BJ (cell line): ENCODE measurements at regions of chr17 and their contacts with region 1.

Region 1: DNA sequence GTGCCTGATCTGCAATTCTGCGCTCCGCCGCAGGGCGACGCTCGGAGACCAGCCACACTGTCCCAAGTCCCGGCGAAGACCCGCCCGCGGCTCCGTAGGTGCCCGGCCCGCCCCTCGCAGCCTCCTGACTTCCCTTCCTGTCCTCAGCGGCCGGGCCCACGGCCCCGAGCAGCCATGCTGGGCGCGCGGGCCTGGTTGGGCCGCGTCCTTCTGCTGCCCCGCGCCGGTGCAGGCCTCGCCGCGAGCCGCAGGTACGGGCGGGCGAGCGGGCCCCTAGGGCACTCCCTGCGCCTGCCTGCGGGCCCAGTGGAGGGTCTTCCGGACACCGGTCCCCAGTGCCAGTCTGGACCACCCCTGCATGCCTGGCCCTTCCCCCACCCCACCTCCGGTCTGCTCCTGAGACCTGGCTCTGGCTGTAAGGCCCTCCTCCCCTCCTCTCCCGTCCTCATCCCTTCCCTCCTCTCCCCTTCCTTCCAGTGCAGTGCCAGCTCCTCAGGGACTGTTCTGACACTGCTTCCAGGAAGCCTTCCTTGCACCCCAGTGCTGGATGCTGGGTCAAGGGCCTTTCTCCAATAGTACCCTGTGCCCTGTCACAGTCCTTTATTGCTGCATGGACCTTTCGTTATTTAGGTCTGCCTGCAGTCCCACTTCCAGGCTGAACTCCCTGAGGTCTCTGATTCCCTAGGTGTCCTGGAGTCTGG is at the start of gene SPATA20:
- DNase-seq: peak; percentile 29
- H3K4me3 ChIP-seq: peak within 1 kb of the TSS; percentile 52
- H3K27me3 ChIP-seq: no peaks in the 10 kb centered on the region
- CTCF ChIP-seq: peak; percentile 96
- polyA plus RNA-seq, gene SPATA20: 27.7 and 46.4 TPM in 2 replicates

Region 2: GRCh38 chr17:50421308-50422051 is 125.7 kb before region 1 on chr17:
- CTCF ChIA-PET with region 1: no interaction called
- POLR2A ChIA-PET with region 1: no interaction called
- DNase-seq: no peak
- H3K4me3 ChIP-seq: no peak overlapping the region
- H3K27me3 ChIP-seq: no peaks in the 10 kb centered on the region
- CTCF ChIP-seq: no peak

Region 3: DNA sequence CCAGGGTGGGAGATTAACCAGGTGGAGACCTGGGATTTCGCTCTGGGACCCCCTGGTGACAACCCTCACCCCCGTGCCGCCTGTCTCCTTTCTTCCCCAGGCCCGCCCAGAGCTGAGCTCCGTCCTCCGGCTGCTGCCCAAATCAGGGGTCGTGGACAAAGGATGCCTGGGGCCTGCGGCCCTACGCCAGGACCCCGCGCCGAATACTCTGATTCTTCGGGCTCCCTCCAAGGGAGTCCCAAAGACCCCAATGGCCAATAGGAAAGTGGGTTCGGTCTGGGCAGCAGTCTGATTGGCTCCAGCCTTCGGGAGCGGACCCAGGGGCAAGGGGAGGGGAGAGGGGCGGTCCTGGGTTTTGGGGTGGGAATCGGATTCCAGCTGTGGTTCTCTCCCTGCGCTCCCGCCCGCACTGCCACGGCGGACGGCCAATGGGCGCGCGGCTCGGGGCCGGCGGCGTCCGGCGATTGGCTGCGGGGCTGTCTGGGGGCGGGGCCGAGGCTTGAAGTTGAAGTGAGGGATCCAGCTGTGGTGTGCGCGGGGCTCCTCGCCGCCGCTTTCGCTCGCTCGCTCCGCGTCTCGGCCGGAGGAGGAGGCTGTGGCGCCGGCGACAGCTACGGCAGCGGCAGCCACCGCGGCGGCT is 13.1 kb after region 1 on chr17 and contains the start of gene CACNA1G:
- CTCF ChIA-PET with region 1: interaction called, 41 read pairs
- POLR2A ChIA-PET with region 1: no interaction called
- DNase-seq: peak; percentile 25
- H3K4me3 ChIP-seq: peak within 1 kb of the TSS; percentile 37
- H3K27me3 ChIP-seq: peaks cover 40% of the 10 kb centered on the region
- CTCF ChIP-seq: no peak
- polyA plus RNA-seq, gene CACNA1G: 0.01 and 0.02 TPM in 2 replicates

Region 4: DNA sequence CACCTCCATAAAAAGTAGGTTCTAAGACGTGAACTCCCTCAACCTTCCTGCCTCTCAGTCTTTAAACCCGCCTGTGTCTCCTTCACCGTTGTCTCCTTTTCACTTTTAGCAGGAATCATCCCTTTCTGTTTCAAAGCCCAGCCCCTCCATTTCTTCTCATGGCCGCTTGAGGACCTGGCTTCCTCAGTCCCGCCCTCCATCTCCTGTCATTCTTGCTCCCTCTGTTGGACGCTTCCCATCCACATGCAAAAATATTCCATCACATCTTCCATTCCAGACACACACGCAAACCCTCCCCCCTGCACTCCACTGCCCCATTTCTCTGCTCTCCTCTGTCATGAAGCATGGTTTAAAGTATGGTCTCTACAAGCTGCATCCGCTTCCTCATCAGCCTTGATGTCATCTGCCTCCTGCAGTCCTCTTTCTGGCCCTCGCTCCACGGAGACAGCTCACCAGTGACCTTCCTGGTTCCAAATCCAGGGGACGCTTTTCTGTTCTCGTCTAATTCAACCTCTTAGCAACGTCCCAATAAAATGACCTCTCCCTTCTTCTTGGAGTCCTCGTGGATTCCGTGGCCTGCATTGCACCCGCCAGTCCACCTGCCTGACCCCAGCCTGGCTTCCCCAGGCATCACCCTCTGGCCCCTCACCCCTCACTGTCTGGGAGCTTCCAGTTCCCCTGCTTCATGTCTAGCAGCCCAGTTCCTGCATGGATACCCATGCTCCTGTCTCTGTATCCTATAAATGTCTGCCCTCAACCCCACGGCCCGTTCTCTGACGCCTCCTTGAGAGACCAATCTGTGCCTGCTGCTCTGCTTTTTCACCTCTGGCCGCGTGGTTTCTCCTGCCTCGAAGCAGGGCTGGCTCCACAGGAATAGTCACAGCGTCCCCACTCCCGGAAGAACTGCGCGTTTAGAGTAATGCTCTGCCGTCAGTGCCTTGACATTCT is 134.4 kb after region 1 on chr17:
- CTCF ChIA-PET with region 1: interaction called, 11 read pairs
- POLR2A ChIA-PET with region 1: no interaction called
- DNase-seq: no peak
- H3K4me3 ChIP-seq: no peak overlapping the region
- H3K27me3 ChIP-seq: no peaks in the 10 kb centered on the region
- CTCF ChIP-seq: peak; percentile 74

Region 5: DNA sequence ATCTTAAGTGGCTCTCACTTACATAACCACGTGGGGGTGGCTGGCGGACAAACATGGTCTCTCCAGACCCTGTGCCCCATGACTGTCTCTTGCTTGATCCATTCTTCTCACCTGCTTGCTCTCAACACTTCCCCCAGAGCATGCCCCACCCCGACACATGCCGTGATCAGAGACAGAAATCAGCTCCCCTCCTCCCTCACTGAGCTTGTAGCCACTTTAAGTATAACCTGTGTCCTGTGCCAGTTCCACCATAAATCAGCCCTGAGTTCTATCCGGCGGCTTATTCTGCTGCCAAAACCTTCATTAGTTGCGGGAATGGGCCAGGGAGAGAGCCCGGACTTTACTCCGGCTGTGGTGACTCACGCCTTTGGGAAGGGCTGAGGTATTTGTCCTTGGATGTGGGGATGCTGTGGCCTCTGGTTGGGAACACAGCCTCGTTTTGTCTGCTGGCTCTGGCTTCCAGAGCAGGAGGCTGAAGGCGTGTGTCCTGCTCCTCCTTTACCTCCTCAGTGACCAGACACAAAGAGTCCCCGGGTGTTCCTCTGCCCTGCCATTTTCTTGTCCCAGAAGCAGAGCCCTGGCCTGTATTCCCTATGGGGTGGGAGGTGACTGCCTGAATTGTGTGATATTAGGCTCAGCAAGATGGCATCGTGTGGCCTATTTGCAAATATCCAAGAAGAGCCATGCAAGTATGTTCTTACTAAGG is 139.5 kb after region 1 on chr17:
- CTCF ChIA-PET with region 1: interaction called, 111 read pairs
- POLR2A ChIA-PET with region 1: no interaction called
- DNase-seq: no peak
- H3K4me3 ChIP-seq: no peak overlapping the region
- H3K27me3 ChIP-seq: no peaks in the 10 kb centered on the region
- CTCF ChIP-seq: no peak

Region 6: DNA sequence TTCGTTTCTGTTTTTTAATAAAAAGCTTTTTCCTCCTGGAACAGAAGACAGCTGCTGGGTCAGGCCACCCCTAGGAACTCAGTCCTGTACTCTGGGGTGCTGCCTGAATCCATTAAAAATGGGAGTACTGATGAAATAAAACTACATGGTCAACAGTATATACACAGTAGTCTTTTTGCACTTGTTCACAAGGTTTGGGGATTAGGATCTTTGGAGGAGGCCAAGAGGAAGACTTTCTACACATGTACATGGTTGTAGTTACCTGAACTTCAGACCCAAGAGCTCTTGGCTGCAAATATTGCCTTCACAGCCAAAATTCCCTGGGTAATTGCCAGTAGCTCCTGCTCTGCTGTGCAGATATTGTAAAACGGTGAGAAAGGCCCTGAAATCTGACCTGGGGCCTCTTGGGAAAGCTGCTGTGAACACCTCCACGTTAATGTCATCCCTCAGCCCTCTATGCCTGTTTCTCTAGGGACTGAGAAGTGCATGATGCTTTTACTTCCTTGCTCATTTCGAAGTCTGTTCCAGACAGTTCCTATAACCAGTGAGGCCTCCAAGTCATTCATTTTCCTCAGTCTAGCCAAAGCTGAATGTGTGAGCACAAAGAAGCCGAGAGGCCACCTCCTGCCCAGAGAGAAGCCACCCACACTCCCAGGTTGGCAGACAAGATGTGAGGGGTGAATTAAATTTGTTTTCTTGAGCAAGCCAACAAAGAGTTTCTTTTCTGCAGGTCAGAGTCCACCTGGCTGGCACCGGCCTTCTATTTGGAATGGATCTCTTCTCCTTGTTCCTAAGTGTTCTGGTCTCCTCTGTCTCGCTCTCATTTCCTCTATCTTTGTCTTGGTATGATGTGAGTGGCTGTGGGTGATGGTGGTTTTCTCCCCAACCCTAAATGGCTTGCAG is 144.6 kb after region 1 on chr17:
- CTCF ChIA-PET with region 1: interaction called, 111 read pairs
- POLR2A ChIA-PET with region 1: no interaction called
- DNase-seq: no peak
- H3K4me3 ChIP-seq: no peak overlapping the region
- H3K27me3 ChIP-seq: no peaks in the 10 kb centered on the region
- CTCF ChIP-seq: no peak

Region 7: DNA sequence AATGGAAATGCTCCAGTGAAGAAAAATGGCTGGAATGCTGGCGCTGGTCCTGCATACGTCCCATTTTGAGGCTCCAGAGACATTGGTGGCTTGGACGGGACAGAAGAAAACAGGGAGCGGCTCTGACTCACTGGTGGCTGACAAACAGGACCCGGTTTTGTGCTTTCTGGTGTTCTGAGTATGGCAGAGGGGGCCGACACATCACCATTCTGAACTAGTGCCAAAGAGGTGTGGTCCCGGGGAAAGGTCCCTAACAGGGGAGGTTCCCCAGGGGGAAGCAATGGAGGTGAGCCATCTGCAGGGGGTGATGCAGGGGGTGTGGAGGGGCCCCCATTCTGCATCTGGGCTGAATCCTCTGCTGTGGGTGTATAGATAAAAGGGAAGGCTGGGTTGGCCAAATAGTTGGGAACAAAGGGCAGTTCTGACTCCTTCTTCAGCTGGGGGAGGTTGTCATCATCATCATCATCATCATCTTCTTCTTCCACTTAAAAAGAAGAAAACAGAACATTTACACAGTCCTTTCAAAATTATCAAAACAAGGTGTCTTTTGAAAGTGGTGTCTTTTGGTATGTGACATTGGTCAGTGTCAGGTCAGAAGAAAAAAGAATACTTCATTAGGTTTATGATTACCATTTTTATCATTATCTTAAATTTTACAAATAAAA is 152.4 kb after region 1 on chr17:
- CTCF ChIA-PET with region 1: interaction called, 111 read pairs
- POLR2A ChIA-PET with region 1: no interaction called
- DNase-seq: no peak
- H3K4me3 ChIP-seq: no peak overlapping the region
- H3K27me3 ChIP-seq: no peaks in the 10 kb centered on the region
- CTCF ChIP-seq: no peak

Region 8: DNA sequence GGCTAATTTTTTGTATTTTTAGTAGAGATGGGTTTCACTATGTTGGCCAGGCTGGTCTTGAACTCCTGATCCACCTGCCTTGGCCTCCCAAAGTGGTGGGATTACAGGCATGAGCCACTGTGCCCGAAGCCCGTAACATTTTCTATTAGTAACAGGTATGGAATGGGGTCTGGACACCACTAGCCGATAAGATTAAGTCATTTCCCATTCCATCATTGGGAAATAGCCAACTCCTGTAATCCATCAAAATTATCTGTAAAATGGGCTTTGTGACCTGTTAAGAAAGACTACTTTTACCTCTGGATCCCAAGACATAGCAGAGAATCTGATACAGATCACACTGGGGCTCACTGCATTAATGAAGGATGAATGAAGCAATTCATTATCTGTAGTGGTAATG is 168.3 kb after region 1 on chr17:
- CTCF ChIA-PET with region 1: no interaction called
- POLR2A ChIA-PET with region 1: no interaction called
- DNase-seq: no peak
- H3K4me3 ChIP-seq: no peak overlapping the region
- H3K27me3 ChIP-seq: 0 out of 2 replicates have a peak, but pooled peaks cover 2% of the 10 kb centered on the region
- CTCF ChIP-seq: no peak

Region 9: GRCh38 chr17:50841949-50842354 is 294.8 kb after region 1 on chr17:
- CTCF ChIA-PET with region 1: interaction called, 13 read pairs
- POLR2A ChIA-PET with region 1: no interaction called
- DNase-seq: no peak
- H3K4me3 ChIP-seq: no peak overlapping the region
- H3K27me3 ChIP-seq: no peaks in the 10 kb centered on the region
- CTCF ChIP-seq: peak; percentile 87